ENCODE measurements at regions of chrX and their contacts with region 1.

Region 1: DNA sequence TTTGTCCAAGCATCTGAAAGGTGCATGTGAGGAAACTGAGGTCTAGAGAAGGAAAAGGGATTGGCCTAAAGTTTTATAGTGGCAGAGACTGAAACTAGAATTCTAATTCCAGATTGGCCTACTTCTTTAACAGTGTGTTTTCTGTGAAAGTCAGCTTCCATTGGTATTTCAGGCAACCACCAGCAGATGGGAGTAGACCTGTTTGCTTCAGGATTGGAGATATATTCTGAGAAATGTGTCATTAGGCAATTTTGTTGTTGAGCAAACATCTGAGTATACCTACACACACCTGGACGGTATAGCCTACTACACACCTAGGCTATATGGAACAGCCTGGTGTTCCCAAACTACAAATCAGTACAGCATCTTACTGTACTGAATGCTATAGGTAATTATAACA is 207.3 kb upstream of the RADX start:
- H3K4me3 ChIP-seq: no peak overlapping the region
- H3K27ac ChIP-seq: no peak overlapping the region
- H3K4me1 ChIP-seq: no peaks in the 10 kb centered on the region
- CTCF ChIP-seq: no peak

Region 2: GRCh38 chrX:106415276-106415895 is 10.9 kb after region 1 on chrX:
- CTCF ChIA-PET with region 1: interaction called, 29 read pairs
- POLR2A ChIA-PET with region 1: no interaction called
- H3K4me3 ChIP-seq: no peak overlapping the region
- H3K27ac ChIP-seq: no peak overlapping the region
- H3K4me1 ChIP-seq: no peaks in the 10 kb centered on the region
- CTCF ChIP-seq: no peak; the same call in 1 of the 2 replicates